ENCODE measurements at regions of chr3 and their contacts with region 1.

Region 1: DNA sequence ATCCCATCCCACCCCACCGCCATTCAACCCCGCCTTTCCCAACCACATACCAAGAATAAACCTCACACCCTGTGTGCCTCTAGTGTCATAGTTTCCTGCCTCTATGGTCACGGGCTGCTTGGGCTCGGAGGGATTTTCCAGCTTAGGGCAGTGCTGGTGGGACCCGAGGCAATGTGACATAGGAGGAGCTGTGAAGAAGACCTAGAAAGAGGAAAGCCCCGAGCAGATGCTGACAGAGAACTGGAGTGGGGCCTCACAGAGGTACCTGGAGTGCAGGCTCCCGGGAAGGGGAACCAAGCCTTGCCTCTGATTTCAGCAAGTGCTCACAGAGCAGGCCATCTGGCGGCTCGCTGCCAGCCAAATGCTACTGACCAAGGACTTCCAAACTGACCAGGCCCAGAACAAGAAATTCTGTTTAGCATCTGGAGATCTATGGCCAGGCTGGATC is 27.5 kb downstream of the BHLHE40 start:
- DNase-seq: peak; percentile 58
- H3K4me3 Mint-ChIP-seq: no peak overlapping the region
- H3K27ac Mint-ChIP-seq: peak overlapping the region; percentile 67
- H3K4me1 Mint-ChIP-seq: peaks cover 64% of the 10 kb centered on the region
- H3K27me3 Mint-ChIP-seq: no peaks in the 10 kb centered on the region

Region 2: DNA sequence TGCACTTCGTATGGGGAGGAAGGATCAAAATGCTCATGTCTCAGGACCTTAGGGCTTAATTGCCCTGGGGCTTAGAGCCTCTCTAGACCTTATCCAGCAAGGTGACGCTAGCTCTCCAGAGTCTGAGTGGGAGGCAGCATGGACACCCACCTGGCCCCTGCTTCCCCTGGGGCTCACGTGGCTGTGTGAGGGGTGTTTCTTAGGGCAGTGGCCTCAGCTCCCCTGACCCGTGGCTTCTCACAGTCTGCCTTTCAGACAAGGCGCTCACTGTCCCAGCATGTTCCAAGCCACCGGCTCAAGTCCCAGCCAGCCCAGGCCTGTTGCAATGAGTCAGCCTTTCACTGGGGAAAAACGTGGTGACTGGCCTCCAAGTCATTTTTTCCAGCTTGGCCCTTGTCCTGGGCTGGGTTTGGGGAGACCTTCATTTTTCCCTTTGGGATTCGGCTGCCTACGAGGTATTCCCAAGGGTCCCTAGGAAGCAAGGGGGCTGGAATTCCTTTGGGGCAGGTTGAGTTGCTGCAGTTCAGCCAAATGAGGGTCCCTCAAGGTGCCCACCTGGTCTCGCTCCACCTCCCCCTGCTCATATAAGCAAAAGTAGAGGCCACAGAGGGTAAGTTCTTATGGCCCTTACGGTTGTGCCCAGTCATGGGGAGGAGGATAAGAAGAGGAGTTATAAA is 11.8 kb before region 1 on chr3:
- CTCF ChIA-PET with region 1: interaction called, 23 read pairs
- POLR2A ChIA-PET with region 1: no interaction called
- DNase-seq: no peak
- H3K4me3 Mint-ChIP-seq: no peak overlapping the region
- H3K27ac Mint-ChIP-seq: no peak overlapping the region
- H3K4me1 Mint-ChIP-seq: peaks cover 17% of the 10 kb centered on the region
- H3K27me3 Mint-ChIP-seq: no peaks in the 10 kb centered on the region